PC-9 (cell line): ENCODE measurements at regions of chr4 and their contacts with region 1.

Region 1: DNA sequence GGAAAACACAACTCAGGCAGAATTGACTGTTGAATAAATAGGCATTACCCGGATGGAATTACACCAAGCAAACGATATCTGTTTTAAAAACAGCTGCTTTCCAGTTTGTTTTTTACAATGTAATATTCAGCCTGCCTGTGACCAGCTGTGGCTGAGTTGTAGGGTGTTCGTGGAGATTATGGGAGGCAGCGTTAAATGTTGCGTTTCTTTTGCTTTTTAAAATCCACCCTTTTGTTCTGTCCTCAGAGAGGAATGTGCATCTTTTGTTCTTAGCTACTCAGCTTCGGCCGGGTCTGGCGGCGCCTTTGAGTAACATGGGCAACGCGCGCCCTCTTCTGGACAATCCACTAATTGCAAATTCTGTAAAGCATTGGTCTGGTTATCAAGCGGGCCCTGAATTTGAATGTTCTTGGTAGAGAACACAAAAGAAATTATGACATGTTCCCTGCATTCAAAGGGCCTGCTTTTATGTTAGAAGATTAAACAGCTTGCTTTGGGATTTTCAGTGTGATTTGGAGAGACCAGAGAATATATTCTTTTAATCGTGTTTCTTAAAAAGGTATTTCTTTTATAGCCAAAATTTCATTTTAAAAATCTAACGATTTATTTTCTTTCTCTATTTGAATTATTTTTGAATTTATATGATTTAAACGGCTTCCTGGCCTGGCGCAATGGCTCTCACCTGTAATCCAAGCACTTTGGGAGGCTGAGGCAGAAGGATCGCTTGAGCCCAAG is 76.3 kb upstream of the TRIM2 start:
- DNase-seq: peak; percentile 63 to 84
- H3K4me3 ChIP-seq: no peak overlapping the region
- H3K27ac ChIP-seq: no peak overlapping the region
- H3K4me1 ChIP-seq: no peaks in the 10 kb centered on the region
- H3K27me3 ChIP-seq: no peaks in the 10 kb centered on the region
- CTCF ChIP-seq: peak; percentile 84

Region 2: DNA sequence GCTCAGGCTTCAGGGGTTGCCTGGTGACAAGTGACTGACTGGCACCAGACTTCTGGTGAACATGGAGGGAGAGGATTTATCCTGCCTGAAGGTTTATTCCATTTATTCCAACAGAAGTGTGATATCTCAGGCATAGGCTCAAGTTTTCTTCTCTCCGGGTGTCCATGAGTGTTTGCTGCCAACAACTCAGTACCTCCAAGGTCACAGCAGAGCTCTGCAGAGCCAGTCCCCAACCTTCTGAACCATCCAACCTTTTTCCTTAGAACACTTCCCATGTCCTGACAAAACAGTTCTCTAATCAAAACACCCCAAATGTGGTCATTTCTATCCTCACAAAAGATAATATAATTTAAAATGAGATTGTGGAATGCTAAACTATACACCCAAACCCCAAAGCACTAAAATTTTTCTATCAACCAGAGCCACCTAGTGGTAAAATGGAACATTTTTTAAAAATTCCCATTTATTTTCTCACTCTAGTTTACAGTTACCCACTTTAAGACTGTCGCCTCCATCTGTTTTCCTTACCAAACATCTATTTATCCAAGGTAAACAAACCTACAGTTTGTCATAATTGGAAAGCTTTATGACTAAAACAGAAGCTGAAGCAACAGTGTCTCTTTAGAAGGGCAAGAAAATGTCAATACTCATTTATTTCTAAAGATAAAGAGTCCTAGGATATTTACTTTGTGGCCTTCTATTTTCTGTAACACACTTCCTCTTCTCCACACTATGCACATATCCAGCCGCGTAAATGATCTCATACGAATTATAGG is 487.7 kb before region 1 on chr4:
- CTCF ChIA-PET with region 1: no interaction called
- POLR2A ChIA-PET with region 1: no interaction called
- intact Hi-C with region 1: loop called (anchors 10 kb)
- DNase-seq: peak in 1 of 2 experiments; percentile 37
- H3K4me3 ChIP-seq: no peak overlapping the region
- H3K27ac ChIP-seq: no peak overlapping the region
- H3K4me1 ChIP-seq: no peaks in the 10 kb centered on the region
- H3K27me3 ChIP-seq: no peaks in the 10 kb centered on the region
- CTCF ChIP-seq: peak; percentile 79

Region 3: DNA sequence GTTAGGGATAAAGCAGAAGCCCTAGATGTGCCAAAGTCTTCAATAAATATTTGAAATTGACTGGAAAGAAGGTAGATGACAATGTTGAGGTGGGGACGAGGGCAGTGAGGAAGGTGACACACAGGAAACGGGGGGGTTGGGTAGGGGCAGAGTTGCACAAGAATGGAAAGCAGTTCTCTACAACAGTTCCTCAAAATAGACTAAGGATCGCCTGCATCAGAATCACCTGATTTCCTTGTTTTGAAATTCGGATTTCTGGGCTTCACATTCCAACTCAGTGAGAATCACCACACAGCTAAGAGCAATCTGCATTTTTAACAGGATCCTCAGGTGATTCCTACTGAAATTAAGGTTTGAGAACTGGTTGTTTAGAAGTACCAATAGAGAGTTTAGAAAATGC is 277.6 kb before region 1 on chr4:
- CTCF ChIA-PET with region 1: interaction called, 8 read pairs
- POLR2A ChIA-PET with region 1: no interaction called
- intact Hi-C with region 1: loop called (anchors 1 kb)
- DNase-seq: peak; percentile 19 to 64
- H3K4me3 ChIP-seq: no peak overlapping the region
- H3K27ac ChIP-seq: peak overlapping the region; percentile 74
- H3K4me1 ChIP-seq: peaks cover 20% of the 10 kb centered on the region
- H3K27me3 ChIP-seq: no peaks in the 10 kb centered on the region
- CTCF ChIP-seq: no peak

Region 4: DNA sequence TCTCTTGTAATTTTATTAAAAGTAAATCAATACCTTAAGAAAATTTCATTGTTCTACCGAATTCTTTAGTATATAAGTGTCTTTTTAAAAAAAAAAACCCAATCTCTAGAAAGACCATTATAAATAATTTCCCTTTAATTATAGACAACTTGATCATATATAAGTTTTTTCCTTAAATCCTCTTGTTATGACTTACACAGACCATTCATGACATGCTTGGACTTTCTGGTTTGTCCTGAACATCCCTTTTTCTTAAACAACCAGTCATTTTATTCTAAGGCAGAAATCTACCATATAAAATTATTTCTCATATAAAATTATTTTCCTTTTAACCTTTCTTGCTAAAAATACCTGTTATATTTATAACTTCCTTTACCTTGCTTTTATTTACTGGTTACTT is 207.2 kb before region 1 on chr4:
- CTCF ChIA-PET with region 1: no interaction called
- POLR2A ChIA-PET with region 1: no interaction called
- intact Hi-C with region 1: no loop called
- DNase-seq: no peak
- H3K4me3 ChIP-seq: no peak overlapping the region
- H3K27ac ChIP-seq: no peak overlapping the region
- H3K4me1 ChIP-seq: no peaks in the 10 kb centered on the region
- H3K27me3 ChIP-seq: no peaks in the 10 kb centered on the region
- CTCF ChIP-seq: no peak

Region 5: GRCh38 chr4:152970102-152970820 is 157.7 kb before region 1 on chr4:
- CTCF ChIA-PET with region 1: no interaction called
- POLR2A ChIA-PET with region 1: interaction called, 16 read pairs
- intact Hi-C with region 1: no loop called
- DNase-seq: peak; percentile 77 to 92
- H3K4me3 ChIP-seq: no peak overlapping the region
- H3K27ac ChIP-seq: peak overlapping the region; percentile 88
- H3K4me1 ChIP-seq: peaks cover 59% of the 10 kb centered on the region
- H3K27me3 ChIP-seq: no peaks in the 10 kb centered on the region
- CTCF ChIP-seq: no peak

Region 6: GRCh38 chr4:153318696-153319320 is 190.9 kb after region 1 on chr4:
- CTCF ChIA-PET with region 1: no interaction called
- POLR2A ChIA-PET with region 1: no interaction called
- intact Hi-C with region 1: loop called (anchors 5 kb)
- DNase-seq: peak in 1 of 2 experiments; percentile 8
- H3K4me3 ChIP-seq: no peak overlapping the region
- H3K27ac ChIP-seq: no peak overlapping the region
- H3K4me1 ChIP-seq: no peaks in the 10 kb centered on the region
- H3K27me3 ChIP-seq: no peaks in the 10 kb centered on the region
- CTCF ChIP-seq: peak; percentile 69